ENCODE measurements at regions of chr4 and their contacts with region 1.

Region 1: GRCh38 chr4:139603576-139604387 is 47.8 kb upstream of the SETD7 start:
- DNase-seq: peak; percentile 80
- H3K4me3 ChIP-seq: no peak overlapping the region
- H3K27ac ChIP-seq: peak overlapping the region; percentile 63
- H3K4me1 ChIP-seq: peaks cover 56% of the 10 kb centered on the region
- H3K27me3 ChIP-seq: no peaks in the 10 kb centered on the region
- CTCF ChIP-seq: peak; percentile 84

Region 2: GRCh38 chr4:138967313-138967712 is 636.5 kb before region 1 on chr4:
- CTCF ChIA-PET with region 1: no interaction called
- POLR2A ChIA-PET with region 1: no interaction called
- intact Hi-C with region 1: no loop called
- DNase-seq: no peak
- H3K4me3 ChIP-seq: no peak overlapping the region
- H3K27ac ChIP-seq: no peak overlapping the region
- H3K4me1 ChIP-seq: no peaks in the 10 kb centered on the region
- H3K27me3 ChIP-seq: no peaks in the 10 kb centered on the region
- CTCF ChIP-seq: no peak

Region 3: DNA sequence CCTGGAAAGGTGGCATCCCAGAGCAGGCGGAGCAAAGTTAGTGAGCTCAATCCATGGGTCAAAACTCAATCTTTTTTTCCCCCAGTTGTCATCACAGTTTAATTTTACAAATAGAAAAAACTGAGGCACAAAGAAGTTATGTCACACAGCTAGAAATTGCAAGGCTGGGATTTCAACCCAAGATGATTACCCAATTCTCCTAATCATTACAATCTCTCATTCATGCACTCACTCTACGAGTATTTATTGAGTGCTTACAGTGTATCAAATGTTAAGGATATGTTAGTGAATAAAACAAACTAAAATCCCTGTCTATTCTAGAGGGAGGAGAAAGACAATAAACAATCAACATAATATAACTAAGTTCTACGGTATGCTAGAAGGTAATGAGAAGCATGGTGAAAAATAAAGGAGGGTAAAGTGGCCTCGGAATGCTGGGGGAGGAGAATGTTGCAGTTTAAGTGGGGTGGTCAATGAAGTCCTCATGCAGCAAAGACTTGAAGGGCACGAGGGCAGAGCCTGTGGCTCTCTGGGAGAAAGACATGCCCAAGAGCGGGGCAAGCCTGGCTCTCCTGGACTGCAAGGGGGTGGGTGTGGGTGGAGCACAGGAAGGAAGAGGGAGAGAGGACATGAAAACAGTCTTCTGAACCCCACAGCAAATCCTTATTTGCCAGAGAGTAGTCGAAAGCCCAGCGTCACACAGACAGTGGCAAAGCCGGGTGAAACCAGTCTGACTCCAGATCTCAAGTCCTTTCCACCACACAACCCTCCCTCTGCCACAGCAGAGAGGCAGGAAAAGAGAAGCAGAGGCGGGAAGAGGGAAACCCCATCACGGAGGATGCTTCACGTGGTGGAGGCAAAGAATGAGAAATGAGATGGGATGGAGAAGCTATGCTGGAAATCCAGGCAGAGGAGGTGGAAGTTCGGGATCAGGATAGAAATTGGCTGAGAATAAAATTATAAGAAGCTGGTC is 101.6 kb before region 1 on chr4:
- CTCF ChIA-PET with region 1: no interaction called
- POLR2A ChIA-PET with region 1: no interaction called
- intact Hi-C with region 1: no loop called
- DNase-seq: no peak
- H3K4me3 ChIP-seq: no peak overlapping the region
- H3K27ac ChIP-seq: no peak overlapping the region
- H3K4me1 ChIP-seq: peaks cover 6% of the 10 kb centered on the region
- H3K27me3 ChIP-seq: no peaks in the 10 kb centered on the region
- CTCF ChIP-seq: no peak

Region 4: GRCh38 chr4:139633661-139634060 is 29.9 kb after region 1 on chr4:
- CTCF ChIA-PET with region 1: interaction called, 18 read pairs
- POLR2A ChIA-PET with region 1: no interaction called
- intact Hi-C with region 1: loop called (anchors 5 kb)
- DNase-seq: peak; percentile 58
- H3K4me3 ChIP-seq: no peak overlapping the region
- H3K27ac ChIP-seq: no peak overlapping the region
- H3K4me1 ChIP-seq: peaks cover 17% of the 10 kb centered on the region
- H3K27me3 ChIP-seq: no peaks in the 10 kb centered on the region
- CTCF ChIP-seq: peak; percentile 67

Region 5: GRCh38 chr4:139639654-139640053 is 35.9 kb after region 1 on chr4:
- CTCF ChIA-PET with region 1: interaction called, 5 read pairs
- POLR2A ChIA-PET with region 1: no interaction called
- intact Hi-C with region 1: loop called (anchors 5 kb)
- DNase-seq: no peak
- H3K4me3 ChIP-seq: no peak overlapping the region
- H3K27ac ChIP-seq: no peak overlapping the region
- H3K4me1 ChIP-seq: no peaks in the 10 kb centered on the region
- H3K27me3 ChIP-seq: no peaks in the 10 kb centered on the region
- CTCF ChIP-seq: no peak

Measured in A673 (cell line).